B cell (primary cell): ENCODE measurements at regions of chr18 and their contacts with region 1.

Region 1: GRCh38 chr18:59988098-59988706 is 88.4 kb downstream of the PMAIP1 start:
- DNase-seq: peak; percentile 67
- ATAC-seq: peak; percentile 47
- H3K4me3 ChIP-seq: no peak overlapping the region
- H3K4me3 Mint-ChIP-seq: no peak overlapping the region
- H3K27ac ChIP-seq: no peak overlapping the region
- H3K27ac Mint-ChIP-seq: no peak overlapping the region
- H3K4me1 ChIP-seq: no peaks in the 10 kb centered on the region
- H3K4me1 Mint-ChIP-seq: no peaks in the 10 kb centered on the region
- H3K27me3 ChIP-seq: peaks cover 0 to 5% (median 4%) of the 10 kb centered on the region in 4 experiments
- H3K27me3 Mint-ChIP-seq: peaks cover 31% of the 10 kb centered on the region
- CTCF ChIP-seq: peak; percentile 100

Region 2: DNA sequence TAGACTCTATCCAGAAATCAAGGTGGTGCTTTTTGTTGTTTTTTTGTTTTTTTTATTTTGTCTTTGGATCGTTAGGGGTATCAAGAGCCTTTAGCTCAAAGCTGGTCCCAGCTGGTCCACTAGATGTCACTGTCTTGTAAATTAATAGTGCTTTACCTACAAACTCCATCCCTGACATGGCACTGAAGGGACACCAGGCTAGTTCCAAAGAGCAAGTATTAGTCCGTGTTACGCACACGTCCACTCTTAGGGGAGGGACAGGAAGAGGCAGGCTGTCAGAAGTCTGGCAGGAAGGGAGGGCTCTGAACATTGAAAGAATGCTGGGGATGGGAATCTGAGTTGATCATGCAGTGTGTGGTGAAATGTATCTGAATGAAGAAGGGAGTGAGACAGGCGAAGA is 205.1 kb before region 1 on chr18:
- CTCF ChIA-PET with region 1: interaction called, 3 read pairs
- POLR2A ChIA-PET with region 1: no interaction called
- intact Hi-C with region 1: loop called (anchors 5 kb)
- DNase-seq: peak; percentile 31
- ATAC-seq: no peak
- H3K4me3 ChIP-seq: no peak overlapping the region
- H3K4me3 Mint-ChIP-seq: no peak overlapping the region
- H3K27ac ChIP-seq: no peak overlapping the region
- H3K27ac Mint-ChIP-seq: no peak overlapping the region
- H3K4me1 ChIP-seq: no peaks in the 10 kb centered on the region
- H3K4me1 Mint-ChIP-seq: no peaks in the 10 kb centered on the region
- H3K27me3 ChIP-seq: no peaks in the 10 kb centered on the region
- H3K27me3 Mint-ChIP-seq: peaks cover 5% of the 10 kb centered on the region
- CTCF ChIP-seq: peak; percentile 58

Region 3: GRCh38 chr18:59802031-59802430 is 186.2 kb before region 1 on chr18:
- CTCF ChIA-PET with region 1: no interaction called
- POLR2A ChIA-PET with region 1: no interaction called
- intact Hi-C with region 1: no loop called
- DNase-seq: no peak
- ATAC-seq: no peak
- H3K4me3 ChIP-seq: no peak overlapping the region
- H3K4me3 Mint-ChIP-seq: no peak overlapping the region
- H3K27ac ChIP-seq: no peak overlapping the region
- H3K27ac Mint-ChIP-seq: no peak overlapping the region
- H3K4me1 ChIP-seq: no peaks in the 10 kb centered on the region
- H3K4me1 Mint-ChIP-seq: no peaks in the 10 kb centered on the region
- H3K27me3 ChIP-seq: no peaks in the 10 kb centered on the region
- H3K27me3 Mint-ChIP-seq: no peaks in the 10 kb centered on the region
- CTCF ChIP-seq: no peak

Region 4: DNA sequence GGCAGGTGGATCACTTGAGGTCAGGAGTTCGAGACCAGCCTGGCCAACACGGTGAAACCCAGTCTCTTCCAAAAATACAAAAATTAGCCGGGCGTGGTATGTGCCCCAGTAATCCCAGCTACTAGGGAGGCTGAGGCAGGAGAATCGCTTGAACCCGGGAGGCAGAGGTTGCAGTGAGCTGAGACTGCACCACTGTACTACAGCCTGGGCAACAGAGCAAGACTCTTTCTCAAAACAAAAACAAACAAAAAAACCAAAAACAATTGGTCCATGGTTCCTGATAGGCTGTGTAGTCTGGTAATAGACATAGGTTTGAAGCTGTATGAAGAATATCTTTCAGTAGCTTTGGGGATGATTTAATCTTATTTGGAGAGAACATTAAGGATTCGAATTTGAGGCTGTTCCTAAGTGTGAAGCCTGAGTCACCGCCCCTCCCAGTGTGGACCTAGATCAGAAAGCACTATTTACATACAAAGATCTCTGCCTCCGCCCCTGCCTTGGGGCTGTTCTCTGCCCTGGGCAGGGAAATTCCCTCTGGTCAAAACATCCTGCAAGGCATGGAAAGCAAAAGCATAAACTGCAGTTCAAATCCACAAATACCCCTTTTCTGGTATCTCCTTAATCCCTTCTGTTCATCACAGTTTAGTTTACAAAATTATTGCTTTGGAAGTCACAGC is 141.2 kb before region 1 on chr18:
- CTCF ChIA-PET with region 1: interaction called, 16 read pairs
- POLR2A ChIA-PET with region 1: no interaction called
- intact Hi-C with region 1: no loop called
- DNase-seq: peak; percentile 71
- ATAC-seq: peak; percentile 82
- H3K4me3 ChIP-seq: no peak overlapping the region
- H3K4me3 Mint-ChIP-seq: peak overlapping the region; percentile 46
- H3K27ac ChIP-seq: no peak overlapping the region
- H3K27ac Mint-ChIP-seq: peak overlapping the region; percentile 74
- H3K4me1 ChIP-seq: peaks cover 26 to 37% of the 10 kb centered on the region in 2 donors
- H3K4me1 Mint-ChIP-seq: peaks cover 33% of the 10 kb centered on the region
- H3K27me3 ChIP-seq: no peaks in the 10 kb centered on the region
- H3K27me3 Mint-ChIP-seq: no peaks in the 10 kb centered on the region
- CTCF ChIP-seq: no peak

Region 5: GRCh38 chr18:59907172-59907571 is 81.0 kb before region 1 on chr18:
- CTCF ChIA-PET with region 1: interaction called, 24 read pairs
- POLR2A ChIA-PET with region 1: no interaction called
- intact Hi-C with region 1: no loop called
- DNase-seq: peak; percentile 53
- ATAC-seq: no peak
- H3K4me3 ChIP-seq: peak overlapping the region in 2 of 5 experiments; percentile 12 to 45
- H3K4me3 Mint-ChIP-seq: peak overlapping the region; percentile 68
- H3K27ac ChIP-seq: peak overlapping the region; percentile 47 to 88
- H3K27ac Mint-ChIP-seq: peak overlapping the region; percentile 86
- H3K4me1 ChIP-seq: peaks cover 58 to 62% of the 10 kb centered on the region in 2 donors
- H3K4me1 Mint-ChIP-seq: peaks cover 64% of the 10 kb centered on the region
- H3K27me3 ChIP-seq: no peaks in the 10 kb centered on the region
- H3K27me3 Mint-ChIP-seq: no peaks in the 10 kb centered on the region
- CTCF ChIP-seq: no peak

Region 6: DNA sequence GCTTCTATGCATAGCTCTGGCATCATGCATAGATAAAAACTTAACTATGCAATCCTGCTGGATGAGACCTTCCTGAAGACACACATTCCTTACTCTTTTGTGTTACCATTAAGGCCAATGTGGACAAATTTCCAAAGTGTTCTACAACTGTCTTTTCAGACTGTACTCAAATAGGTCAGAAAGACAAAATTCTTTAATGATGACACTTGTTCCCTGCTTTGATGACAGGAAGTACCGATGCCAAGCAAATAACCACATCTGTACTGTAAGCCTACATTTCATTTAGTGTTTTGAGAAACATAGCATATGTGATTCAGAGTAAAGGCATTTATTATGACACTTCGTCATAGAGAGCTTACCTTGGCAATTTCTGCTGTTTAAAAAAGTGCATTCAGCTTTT is 33.5 kb before region 1 on chr18:
- CTCF ChIA-PET with region 1: interaction called, 11 read pairs
- POLR2A ChIA-PET with region 1: no interaction called
- intact Hi-C with region 1: no loop called
- DNase-seq: no peak
- ATAC-seq: no peak
- H3K4me3 ChIP-seq: no peak overlapping the region
- H3K4me3 Mint-ChIP-seq: no peak overlapping the region
- H3K27ac ChIP-seq: no peak overlapping the region
- H3K27ac Mint-ChIP-seq: no peak overlapping the region
- H3K4me1 ChIP-seq: peaks cover 14 to 19% of the 10 kb centered on the region in 2 donors
- H3K4me1 Mint-ChIP-seq: peaks cover 43% of the 10 kb centered on the region
- H3K27me3 ChIP-seq: no peaks in the 10 kb centered on the region
- H3K27me3 Mint-ChIP-seq: no peaks in the 10 kb centered on the region
- CTCF ChIP-seq: no peak

Region 7: DNA sequence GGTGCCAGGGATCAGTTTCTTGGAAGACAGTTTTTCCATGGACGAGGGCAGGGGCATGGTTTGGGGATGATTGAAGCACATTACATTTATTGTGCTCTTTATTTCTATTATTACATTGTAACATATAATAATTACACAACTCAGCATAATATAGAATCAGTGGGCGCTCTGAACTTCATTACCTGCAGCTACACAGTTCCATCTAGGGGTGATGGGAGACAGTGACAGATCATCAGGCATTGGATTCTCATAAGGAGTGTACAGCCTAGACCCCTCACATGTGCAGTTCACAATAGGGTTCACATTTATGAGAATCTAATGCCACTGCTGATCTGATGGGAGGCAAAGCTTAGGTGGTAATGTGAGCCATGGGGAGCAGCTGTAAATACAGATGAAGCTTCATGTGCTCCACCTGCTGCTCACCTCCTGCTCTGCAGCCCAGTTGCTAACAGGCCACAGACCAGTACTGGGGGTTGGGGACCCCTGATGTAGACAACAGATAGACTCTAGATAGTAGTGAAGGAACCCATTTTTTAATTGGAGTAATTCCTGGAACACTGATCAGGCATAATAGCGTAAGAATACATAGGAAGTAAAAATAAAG is 425.8 kb after region 1 on chr18:
- CTCF ChIA-PET with region 1: interaction called, 6 read pairs
- POLR2A ChIA-PET with region 1: no interaction called
- intact Hi-C with region 1: loop called (anchors 10 kb)
- DNase-seq: peak; percentile 3
- ATAC-seq: no peak
- H3K4me3 ChIP-seq: no peak overlapping the region
- H3K4me3 Mint-ChIP-seq: no peak overlapping the region
- H3K27ac ChIP-seq: no peak overlapping the region
- H3K27ac Mint-ChIP-seq: no peak overlapping the region
- H3K4me1 ChIP-seq: no peaks in the 10 kb centered on the region
- H3K4me1 Mint-ChIP-seq: no peaks in the 10 kb centered on the region
- H3K27me3 ChIP-seq: no peaks in the 10 kb centered on the region
- H3K27me3 Mint-ChIP-seq: no peaks in the 10 kb centered on the region
- CTCF ChIP-seq: no peak

Region 8: DNA sequence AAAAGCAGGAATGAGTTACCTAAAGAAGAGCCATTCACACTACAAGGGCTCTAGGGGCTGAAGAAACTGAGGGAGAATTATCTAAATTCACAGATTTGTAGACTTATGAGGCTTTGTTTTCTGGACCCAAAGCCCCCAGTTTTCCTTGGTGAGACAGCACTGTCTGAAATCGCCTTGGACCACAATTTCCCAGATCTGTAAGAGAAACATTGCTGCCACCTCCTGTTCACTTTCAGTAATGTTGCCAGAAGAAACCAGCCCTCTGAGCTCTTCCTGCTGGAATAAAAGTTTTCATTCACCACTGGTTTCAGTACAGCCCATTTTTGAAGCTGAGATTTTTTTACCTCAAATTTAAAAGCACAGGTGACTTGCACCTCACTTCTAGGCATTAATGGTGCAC is 1514.3 kb after region 1 on chr18:
- CTCF ChIA-PET with region 1: interaction called, 18 read pairs
- POLR2A ChIA-PET with region 1: no interaction called
- intact Hi-C with region 1: no loop called
- DNase-seq: peak; percentile 33
- ATAC-seq: no peak
- H3K4me3 ChIP-seq: no peak overlapping the region
- H3K4me3 Mint-ChIP-seq: no peak overlapping the region
- H3K27ac ChIP-seq: no peak overlapping the region
- H3K27ac Mint-ChIP-seq: no peak overlapping the region
- H3K4me1 ChIP-seq: no peaks in the 10 kb centered on the region
- H3K4me1 Mint-ChIP-seq: no peaks in the 10 kb centered on the region
- H3K27me3 ChIP-seq: peaks cover 0 to 2% (median 0%) of the 10 kb centered on the region in 4 experiments
- H3K27me3 Mint-ChIP-seq: peaks cover 12% of the 10 kb centered on the region
- CTCF ChIP-seq: peak; percentile 62